ENCODE measurements at regions of chr11 and their contacts with region 1.

Region 1: DNA sequence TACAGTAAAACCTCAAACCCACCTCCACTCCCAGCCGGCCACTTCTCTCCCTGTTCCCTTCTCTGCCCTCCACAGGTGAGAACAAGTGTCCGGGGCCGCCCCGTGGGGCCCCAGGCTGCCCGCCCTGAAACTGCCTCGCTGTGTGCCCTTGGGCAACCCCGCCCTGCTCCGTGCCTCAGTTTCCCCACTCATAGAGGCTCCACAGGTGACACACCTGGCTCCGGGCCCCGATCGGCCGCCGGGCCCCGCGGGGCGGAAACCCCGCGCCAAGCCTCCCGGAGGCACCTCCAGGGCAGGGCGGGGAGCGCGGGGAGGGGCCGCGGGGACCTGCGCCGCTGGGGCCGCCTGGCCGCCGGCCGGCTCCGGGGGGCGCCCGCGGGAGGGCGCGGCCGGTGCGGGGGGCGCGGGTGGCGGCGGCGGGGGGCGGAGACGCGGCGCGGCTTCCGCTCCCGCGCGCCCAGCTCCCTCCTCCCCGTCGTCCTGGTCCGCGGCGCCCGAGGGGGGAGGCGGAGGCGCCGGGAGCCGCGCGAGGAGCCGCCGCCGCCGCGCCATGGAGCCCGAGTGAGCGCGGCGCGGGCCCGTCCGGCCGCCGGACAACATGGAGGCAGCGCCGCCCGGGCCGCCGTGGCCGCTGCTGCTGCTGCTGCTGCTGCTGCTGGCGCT is at the start of gene LRP5:
- DNase-seq: no peak
- H3K4me3 ChIP-seq: peak within 1 kb of the TSS; percentile 67 to 86 (median 76)
- H3K27ac ChIP-seq: peak within 1 kb of the TSS; percentile 88 to 90 (median 90)
- H3K4me1 ChIP-seq: peaks cover 42 to 51% (median 45%) of the 10 kb centered on the region in 4 donors
- H3K27me3 ChIP-seq: no peaks in the 10 kb centered on the region
- CTCF ChIP-seq: no peak
- EP300 ChIP-seq: no peak
- POLR2A ChIP-seq: no peak
- total RNA-seq, gene LRP5: 34.0 to 78.4 (median 56.2) TPM

Region 2: DNA sequence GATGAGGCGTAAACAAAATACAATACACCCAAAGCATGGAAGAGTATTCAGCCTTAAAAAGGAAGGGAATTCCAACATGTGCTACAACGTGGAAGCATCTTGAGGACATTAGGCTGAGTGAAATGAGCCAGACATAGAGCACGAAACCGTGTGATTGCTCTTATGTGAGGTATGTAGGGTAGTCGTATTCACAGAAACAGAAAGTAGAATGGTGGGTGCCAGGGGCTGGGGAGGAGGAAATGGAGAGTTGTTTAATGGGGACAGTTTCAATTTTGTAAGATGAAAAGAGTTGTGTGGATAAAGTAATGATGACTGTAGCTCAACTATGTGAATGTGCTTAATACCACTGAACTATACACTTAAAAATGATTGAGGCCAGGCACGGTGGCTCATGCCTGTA is 89.0 kb before region 1 on chr11:
- intact Hi-C with region 1: no loop called
- DNase-seq: no peak
- H3K4me3 ChIP-seq: no peak overlapping the region
- H3K27ac ChIP-seq: no peak overlapping the region
- H3K4me1 ChIP-seq: no peaks in the 10 kb centered on the region
- H3K27me3 ChIP-seq: no peaks in the 10 kb centered on the region
- CTCF ChIP-seq: no peak
- EP300 ChIP-seq: no peak
- POLR2A ChIP-seq: no peak

Region 3: GRCh38 chr11:68257475-68258362 is 54.5 kb before region 1 on chr11:
- intact Hi-C with region 1: no loop called
- DNase-seq: peak; percentile 99
- H3K4me3 ChIP-seq: peak overlapping the region; percentile 18 to 36 (median 26)
- H3K27ac ChIP-seq: peak overlapping the region in 2 of 4 donors; percentile 0 to 48
- H3K4me1 ChIP-seq: peaks cover 6 to 21% (median 15%) of the 10 kb centered on the region in 4 donors
- H3K27me3 ChIP-seq: no peaks in the 10 kb centered on the region
- CTCF ChIP-seq: peak; percentile 88 to 96 (median 89)
- EP300 ChIP-seq: no peak
- POLR2A ChIP-seq: no peak

Region 4: DNA sequence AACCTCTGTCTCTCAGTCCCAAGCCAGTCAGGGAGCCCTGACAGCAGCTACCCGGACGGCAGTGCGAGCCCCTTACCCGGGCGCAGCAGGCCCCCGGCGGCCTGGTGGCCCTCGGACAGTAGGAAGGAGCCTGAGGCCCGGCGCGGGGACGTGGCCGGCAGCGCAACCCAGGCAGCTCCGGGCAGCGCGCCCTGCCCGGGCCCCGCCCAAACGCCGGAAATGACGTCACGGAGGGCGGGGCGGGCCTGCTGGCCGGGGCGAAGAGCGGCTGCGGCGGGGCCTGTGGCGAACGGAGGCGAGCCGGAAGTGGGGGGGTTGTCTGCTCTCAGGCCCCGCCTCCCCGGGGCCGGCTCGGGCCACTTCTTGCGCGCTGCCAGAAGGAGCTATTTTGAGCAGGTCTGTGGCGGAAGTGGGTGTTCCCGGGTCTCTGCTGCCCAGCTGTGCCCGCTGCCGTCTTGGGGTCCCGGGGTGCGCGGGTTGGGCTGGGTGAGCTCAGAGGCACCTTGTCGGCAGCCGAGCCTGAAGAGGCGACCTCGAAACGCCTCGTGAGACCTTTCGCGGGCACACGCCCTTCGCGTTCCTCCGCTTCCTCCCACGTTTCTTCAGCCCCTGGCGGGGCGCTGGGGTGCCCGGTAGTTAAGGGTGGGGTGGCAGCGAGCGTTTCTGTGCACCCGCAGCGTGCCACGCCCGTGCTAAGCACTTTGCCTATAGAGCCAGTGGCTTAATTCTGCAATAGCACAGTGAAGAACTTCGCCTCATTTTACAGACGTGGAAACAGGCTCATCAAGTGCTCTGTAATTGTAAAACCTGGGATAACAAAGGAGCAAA is 40.3 kb before region 1 on chr11 and contains the start of gene C11orf24:
- intact Hi-C with region 1: loop called (anchors 5 kb)
- DNase-seq: peak; percentile 99
- H3K4me3 ChIP-seq: peak within 1 kb of the TSS; percentile 58 to 81 (median 72)
- H3K27ac ChIP-seq: peak within 1 kb of the TSS; percentile 89 to 96 (median 92)
- H3K4me1 ChIP-seq: peaks cover 24 to 55% (median 46%) of the 10 kb centered on the region in 4 donors
- H3K27me3 ChIP-seq: no peaks in the 10 kb centered on the region
- CTCF ChIP-seq: peak in 2 of 3 experiments; percentile 6 to 15
- EP300 ChIP-seq: no peak
- POLR2A ChIP-seq: peak; percentile 79
- total RNA-seq, gene C11orf24: 27.0 to 41.5 (median 31.5) TPM

Region 5: GRCh38 chr11:68398995-68399851 is 87.0 kb after region 1 on chr11:
- intact Hi-C with region 1: loop called (anchors 5 kb)
- DNase-seq: no peak
- H3K4me3 ChIP-seq: no peak overlapping the region
- H3K27ac ChIP-seq: peak overlapping the region; percentile 85 to 90 (median 88)
- H3K4me1 ChIP-seq: peaks cover 33 to 68% (median 57%) of the 10 kb centered on the region in 4 donors
- H3K27me3 ChIP-seq: no peaks in the 10 kb centered on the region
- CTCF ChIP-seq: no peak
- EP300 ChIP-seq: no peak
- POLR2A ChIP-seq: no peak

Measured in esophagus muscularis mucosa (tissue), 4 donors.